Cardiac septum (tissue), 1 donor: ENCODE measurements at regions of chr10 and their contacts with region 1.

Region 1: GRCh38 chr10:69644658-69645295 is 14.7 kb downstream of the FAM241B start:
- DNase-seq: no peak

Region 2: GRCh38 chr10:69696073-69696731 is 51.4 kb after region 1 on chr10:
- intact Hi-C with region 1: no loop called
- DNase-seq: no peak

Region 3: DNA sequence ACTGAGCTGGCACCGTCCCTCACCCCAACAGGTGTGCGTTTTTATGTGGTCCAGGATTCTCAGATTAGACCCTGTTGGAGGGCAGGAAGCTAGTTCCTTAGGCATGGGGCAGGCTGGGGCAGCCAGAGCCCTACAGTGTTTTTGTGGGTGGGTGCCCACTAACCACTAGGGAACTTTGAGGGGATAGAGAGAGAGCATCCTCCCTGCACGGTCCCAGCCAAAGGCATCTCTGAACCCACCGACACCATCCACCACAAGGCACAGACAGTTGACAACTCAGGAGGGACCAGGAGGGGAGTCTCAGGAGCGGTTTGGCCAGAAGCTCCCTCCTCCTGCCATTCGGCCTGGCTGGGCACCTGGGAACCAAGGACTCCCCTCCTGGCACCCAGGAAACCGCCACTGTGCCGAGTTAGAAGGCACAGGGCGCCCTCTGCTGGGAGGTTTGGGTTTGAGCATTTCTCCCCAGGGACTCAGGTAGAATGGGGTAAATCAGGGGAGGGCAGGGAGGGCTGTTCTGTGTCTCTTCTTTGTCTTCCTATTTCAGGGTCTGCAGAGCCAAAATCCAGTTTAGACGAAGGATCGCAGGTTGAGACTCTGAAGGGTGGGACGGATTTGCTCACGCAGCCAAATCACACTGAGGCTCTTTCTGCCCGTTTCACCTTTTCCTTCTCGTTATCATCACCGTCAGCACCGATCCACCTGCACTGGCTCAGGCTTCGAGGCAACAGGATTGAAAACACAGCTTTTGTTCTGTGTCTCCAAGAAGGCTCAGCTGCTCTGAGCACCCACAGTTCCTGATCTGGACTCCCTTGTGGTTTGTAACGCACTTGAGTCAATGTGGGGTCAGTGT is 72.2 kb after region 1 on chr10:
- intact Hi-C with region 1: loop called (anchors 2 kb)
- DNase-seq: no peak